ENCODE measurements at regions of chr6 and their contacts with region 1.

Region 1: GRCh38 chr6:148835920-148836441 is 89.2 kb downstream of the UST start:
- DNase-seq: no peak
- H3K4me3 ChIP-seq: no peak overlapping the region
- H3K27ac ChIP-seq: no peak overlapping the region
- H3K4me1 ChIP-seq: peaks cover 39% of the 10 kb centered on the region
- H3K27me3 ChIP-seq: no peaks in the 10 kb centered on the region
- CTCF ChIP-seq: no peak

Region 2: GRCh38 chr6:148746363-148747144 is 89.4 kb before region 1 on chr6 and contains the start of gene UST:
- CTCF ChIA-PET with region 1: no interaction called
- POLR2A ChIA-PET with region 1: no interaction called
- intact Hi-C with region 1: loop called (anchors 5 kb)
- DNase-seq: peak; percentile 70 to 80
- H3K4me3 ChIP-seq: peak within 1 kb of the TSS; percentile 82
- H3K27ac ChIP-seq: 0 out of 2 replicates have a peak within 1 kb of the TSS, but pooled peaks have one; percentile 20
- H3K4me1 ChIP-seq: peaks cover 8% of the 10 kb centered on the region
- H3K27me3 ChIP-seq: no peaks in the 10 kb centered on the region
- CTCF ChIP-seq: peak; percentile 61
- total RNA-seq, gene UST: 3.9 and 4.2 TPM in 2 replicates

Region 3: GRCh38 chr6:148790817-148791216 is 45.2 kb before region 1 on chr6:
- CTCF ChIA-PET with region 1: no interaction called
- POLR2A ChIA-PET with region 1: no interaction called
- intact Hi-C with region 1: no loop called
- DNase-seq: no peak
- H3K4me3 ChIP-seq: no peak overlapping the region
- H3K27ac ChIP-seq: no peak overlapping the region
- H3K4me1 ChIP-seq: no peaks in the 10 kb centered on the region
- H3K27me3 ChIP-seq: no peaks in the 10 kb centered on the region
- CTCF ChIP-seq: no peak

Region 4: GRCh38 chr6:148856324-148856771 is 20.4 kb after region 1 on chr6:
- CTCF ChIA-PET with region 1: no interaction called
- POLR2A ChIA-PET with region 1: no interaction called
- intact Hi-C with region 1: loop called (anchors 1 kb)
- DNase-seq: peak; percentile 44 to 85
- H3K4me3 ChIP-seq: no peak overlapping the region
- H3K27ac ChIP-seq: peak overlapping the region; percentile 47; the same call in 1 of the 2 replicates
- H3K4me1 ChIP-seq: peaks cover 31% of the 10 kb centered on the region
- H3K27me3 ChIP-seq: no peaks in the 10 kb centered on the region
- CTCF ChIP-seq: no peak